ENCODE measurements at regions of chr1 and their contacts with region 1.

Region 1: DNA sequence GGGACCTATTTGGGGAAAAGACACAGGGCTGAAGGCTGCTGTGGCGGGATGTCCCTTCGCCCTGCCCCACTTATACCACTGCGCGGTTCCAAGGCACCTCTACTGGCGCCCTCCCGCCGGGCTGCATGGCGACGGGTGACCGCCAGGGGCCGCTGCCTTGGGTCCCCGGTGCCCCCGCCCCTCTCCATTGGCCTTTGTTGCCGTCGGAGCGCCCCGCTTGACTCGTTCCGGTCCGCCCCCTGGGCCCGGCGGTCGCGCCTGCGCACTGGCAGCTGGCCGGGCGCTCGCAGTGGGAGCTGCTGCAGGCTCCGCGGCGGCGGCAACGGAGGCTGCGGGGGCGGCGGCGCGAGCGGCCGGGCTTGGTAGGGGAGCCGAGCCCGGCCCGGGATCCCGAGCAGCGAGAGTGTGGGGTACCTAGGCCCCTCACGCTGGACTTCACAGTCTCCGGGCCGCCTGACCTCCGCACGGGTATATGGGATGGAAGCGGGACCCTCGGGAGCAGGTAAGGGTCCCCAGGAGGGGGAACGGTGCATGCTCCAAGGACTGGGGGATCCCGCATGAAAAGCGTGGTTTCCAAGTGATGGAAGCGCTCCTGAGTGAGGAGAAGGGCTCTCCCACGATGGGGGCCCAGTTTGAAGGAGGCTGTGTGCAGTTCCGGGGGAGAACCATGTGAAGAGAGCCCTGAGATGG is at the start of gene AGO1:
- DNase-seq: peak; percentile 97
- ATAC-seq: peak; percentile 97
- H3K4me3 Mint-ChIP-seq: peak within 1 kb of the TSS; percentile 90
- H3K27ac Mint-ChIP-seq: peak within 1 kb of the TSS; percentile 69
- H3K4me1 Mint-ChIP-seq: peaks cover 42% of the 10 kb centered on the region
- H3K27me3 Mint-ChIP-seq: no peaks in the 10 kb centered on the region
- total RNA-seq, gene AGO1: 20.8 to 21.3 TPM

Region 2: GRCh38 chr1:35854989-35855700 is 27.9 kb before region 1 on chr1:
- CTCF ChIA-PET with region 1: interaction called, 12 read pairs
- POLR2A ChIA-PET with region 1: no interaction called
- DNase-seq: no peak
- ATAC-seq: no peak
- H3K4me3 Mint-ChIP-seq: no peak overlapping the region
- H3K27ac Mint-ChIP-seq: no peak overlapping the region
- H3K4me1 Mint-ChIP-seq: no peaks in the 10 kb centered on the region
- H3K27me3 Mint-ChIP-seq: no peaks in the 10 kb centered on the region

Region 3: DNA sequence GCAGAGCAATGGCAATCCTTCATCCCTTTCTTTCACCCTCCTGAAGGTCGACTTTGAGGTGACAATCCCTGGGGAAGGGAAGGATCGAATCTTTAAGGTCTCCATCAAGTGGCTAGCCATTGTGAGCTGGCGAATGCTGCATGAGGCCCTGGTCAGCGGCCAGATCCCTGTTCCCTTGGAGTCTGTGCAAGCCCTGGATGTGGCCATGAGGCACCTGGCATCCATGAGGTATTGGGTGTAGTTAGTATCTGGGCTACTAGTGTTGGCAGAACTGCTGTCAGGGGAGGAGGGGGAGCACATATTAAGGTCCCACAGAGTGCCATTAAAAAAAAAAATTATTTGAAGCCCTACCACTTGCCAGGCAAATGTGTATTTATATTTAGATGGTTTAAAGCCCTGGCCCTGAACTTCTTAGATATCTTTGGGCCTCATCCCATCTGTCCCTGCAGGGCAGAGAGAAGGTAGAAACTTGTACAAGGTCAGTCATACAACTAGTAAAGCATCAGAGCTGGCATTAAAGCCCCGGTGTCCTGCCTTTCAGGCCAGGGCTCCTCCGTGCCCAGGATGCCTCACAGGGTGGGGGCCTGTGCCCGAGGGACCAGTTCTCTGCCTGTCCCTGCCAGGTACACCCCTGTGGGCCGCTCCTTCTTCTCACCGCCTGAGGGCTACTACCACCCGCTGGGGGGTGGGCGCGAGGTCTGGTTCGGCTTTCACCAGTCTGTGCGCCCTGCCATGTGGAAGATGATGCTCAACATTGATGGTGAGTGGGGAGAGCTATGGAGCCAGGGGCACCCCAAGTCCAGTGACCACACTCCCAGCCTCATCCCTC is 10.2 kb after region 1 on chr1:
- CTCF ChIA-PET with region 1: interaction called, 14 read pairs
- POLR2A ChIA-PET with region 1: no interaction called
- DNase-seq: no peak
- ATAC-seq: no peak
- H3K4me3 Mint-ChIP-seq: no peak overlapping the region
- H3K27ac Mint-ChIP-seq: no peak overlapping the region
- H3K4me1 Mint-ChIP-seq: peaks cover 4% of the 10 kb centered on the region
- H3K27me3 Mint-ChIP-seq: no peaks in the 10 kb centered on the region

Region 4: DNA sequence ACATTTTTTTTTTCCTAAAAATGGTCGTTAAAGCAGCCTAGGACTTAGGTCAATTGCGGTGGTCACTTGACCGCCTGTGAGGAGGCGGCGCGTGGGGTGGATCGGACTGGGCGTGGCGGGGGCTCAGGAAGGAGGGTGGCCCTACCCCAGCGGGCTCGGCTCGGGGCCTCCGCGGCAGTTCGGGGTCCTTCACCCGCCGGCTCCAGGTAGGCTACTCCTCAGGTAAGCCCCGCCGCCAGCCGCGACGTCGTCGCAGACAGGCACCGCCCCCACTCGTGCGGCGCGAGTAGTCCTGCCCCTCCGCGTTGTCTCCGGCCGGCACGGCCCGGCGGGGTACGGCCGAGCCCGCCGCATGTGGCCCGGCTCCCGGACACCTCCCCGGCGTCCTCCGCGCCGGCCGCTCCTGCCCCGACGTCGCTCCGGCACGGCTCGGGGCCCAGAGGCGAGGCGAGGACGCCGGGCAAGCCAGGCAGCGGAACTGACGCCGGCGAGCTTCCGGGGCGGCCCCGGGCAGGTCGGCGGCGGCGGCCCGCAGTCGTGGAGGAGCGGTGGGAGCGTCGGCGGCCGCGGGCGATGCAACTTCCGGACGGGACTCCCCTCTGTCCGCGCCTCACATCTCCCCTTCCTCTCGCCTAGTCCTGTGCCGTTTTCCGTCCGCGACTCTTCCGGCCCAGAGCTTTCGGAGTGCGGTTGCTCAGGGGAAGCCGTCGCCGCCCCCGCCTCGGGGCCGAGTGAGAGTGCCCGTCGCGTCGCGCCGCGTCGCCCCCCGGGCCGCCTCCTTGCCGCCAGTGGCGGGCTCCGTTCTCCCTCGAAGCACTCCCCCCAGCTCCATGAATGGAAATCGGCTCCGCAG is 47.7 kb after region 1 on chr1 and contains the start of gene AGO3:
- CTCF ChIA-PET with region 1: interaction called, 21 read pairs
- POLR2A ChIA-PET with region 1: interaction called, 7 read pairs
- DNase-seq: peak; percentile 91
- ATAC-seq: peak; percentile 88
- H3K4me3 Mint-ChIP-seq: peak within 1 kb of the TSS; percentile 91
- H3K27ac Mint-ChIP-seq: peak within 1 kb of the TSS; percentile 95
- H3K4me1 Mint-ChIP-seq: peaks cover 36% of the 10 kb centered on the region
- H3K27me3 Mint-ChIP-seq: no peaks in the 10 kb centered on the region
- total RNA-seq, gene AGO3: 27.2 to 30.2 TPM

Region 5: DNA sequence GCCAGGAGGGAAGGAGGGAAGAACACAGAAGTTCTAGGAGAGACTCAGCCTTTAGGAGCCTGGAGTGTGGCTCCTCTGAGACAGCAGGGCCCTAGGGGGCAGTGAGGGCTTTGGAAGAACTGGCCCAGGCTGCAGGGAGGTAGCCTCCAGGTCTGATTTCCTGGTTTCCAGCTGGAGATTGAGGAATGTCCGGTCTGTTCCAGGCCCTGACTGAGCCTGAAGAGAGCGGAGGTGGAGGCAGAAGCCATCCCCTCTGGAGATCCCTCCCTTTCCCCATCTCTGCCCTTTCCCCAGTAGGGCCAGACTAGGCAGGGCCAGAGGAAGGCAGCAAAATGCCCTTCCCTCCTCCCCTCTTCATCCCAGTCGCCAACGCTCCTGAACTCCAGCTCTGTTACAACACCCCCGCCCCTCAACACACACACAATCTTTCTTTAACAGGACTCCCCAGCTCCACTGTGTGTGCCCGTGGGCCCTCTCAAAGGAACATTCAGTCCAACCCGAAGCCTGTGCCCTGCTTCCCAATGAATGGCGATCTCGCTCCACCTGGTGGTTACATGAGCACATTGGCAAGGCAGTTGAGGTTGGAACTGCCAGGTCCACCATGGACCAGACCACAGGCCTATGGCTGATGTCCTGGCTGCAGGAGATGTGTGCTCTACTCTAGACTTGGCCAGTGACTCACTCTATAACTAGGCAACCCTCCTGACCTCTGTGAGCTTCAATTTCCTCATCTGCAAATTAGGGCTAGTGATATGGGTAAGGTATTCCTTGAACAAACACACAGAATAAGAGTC is 304.9 kb after region 1 on chr1:
- CTCF ChIA-PET with region 1: no interaction called
- POLR2A ChIA-PET with region 1: no interaction called
- DNase-seq: peak; percentile 87
- ATAC-seq: peak; percentile 99
- H3K4me3 Mint-ChIP-seq: no peak overlapping the region
- H3K27ac Mint-ChIP-seq: peak overlapping the region; percentile 73
- H3K4me1 Mint-ChIP-seq: peaks cover 5% of the 10 kb centered on the region
- H3K27me3 Mint-ChIP-seq: no peaks in the 10 kb centered on the region